AG04449 (cell line): ENCODE measurements at regions of chr4 and their contacts with region 1.

Region 1: DNA sequence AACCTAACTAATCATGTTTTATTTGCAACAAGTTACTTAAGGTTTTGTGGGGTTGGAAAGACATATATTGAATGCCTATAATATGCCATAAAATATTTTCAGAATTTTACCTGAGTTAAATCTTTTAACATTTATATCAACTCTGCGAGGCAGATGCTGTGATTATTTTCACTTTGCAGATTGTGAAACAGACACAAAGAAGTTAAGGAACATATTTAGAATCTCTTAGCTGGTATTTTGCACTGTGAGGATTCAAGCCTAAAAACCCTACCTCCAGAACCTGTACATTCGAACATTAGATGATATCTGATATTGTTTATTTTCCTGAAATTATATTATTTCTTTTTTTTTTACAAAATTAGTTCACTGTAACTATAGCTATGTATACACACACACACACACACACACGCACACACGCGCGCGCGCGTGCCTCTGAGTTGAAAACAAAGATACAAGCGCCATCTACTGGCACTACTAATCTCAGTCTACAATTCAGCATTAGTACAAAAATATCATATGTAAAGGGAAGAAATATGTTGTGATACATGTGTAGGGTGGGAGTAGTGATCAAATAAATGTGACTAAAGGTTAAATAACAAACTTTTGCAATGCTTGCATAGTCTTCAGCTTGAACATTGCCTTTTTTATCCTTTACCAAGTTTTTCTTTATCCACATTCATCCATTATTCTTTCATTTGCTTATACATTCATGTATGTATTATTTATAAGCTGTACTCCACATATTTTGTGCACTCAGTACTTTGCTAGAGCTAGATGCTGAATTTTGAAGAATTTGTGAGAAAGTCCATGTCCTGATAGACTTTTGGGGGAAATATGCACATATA is 61.5 kb downstream of the ANXA10 start:
- DNase-seq: no peak
- H3K4me3 ChIP-seq: no peak overlapping the region
- CTCF ChIP-seq: peak; percentile 58

Region 2: GRCh38 chr4:167021545-167022155 is 1132.2 kb before region 1 on chr4:
- CTCF ChIA-PET with region 1: interaction called, 21 read pairs
- POLR2A ChIA-PET with region 1: no interaction called
- DNase-seq: no peak
- H3K4me3 ChIP-seq: no peak overlapping the region
- CTCF ChIP-seq: peak; percentile 60

Region 3: DNA sequence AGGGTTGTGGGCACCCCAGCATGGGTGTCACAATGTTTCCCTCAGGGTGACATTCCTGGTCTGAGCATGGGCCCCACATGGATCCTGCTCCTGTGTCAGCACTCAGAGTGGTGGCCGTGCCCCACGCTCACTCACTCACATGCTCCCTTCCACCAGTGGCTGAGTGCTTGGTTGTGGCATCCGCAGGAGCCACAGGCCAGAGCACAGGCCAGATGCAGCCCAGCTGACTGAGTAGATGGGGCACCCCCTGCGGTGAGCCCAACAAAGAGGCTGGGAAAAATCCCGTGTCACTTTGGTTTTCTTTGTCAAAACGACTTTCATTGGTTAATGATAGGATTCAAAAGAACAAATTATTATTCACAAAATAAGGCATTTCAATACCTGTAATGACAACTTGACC is 266.1 kb before region 1 on chr4:
- CTCF ChIA-PET with region 1: no interaction called
- POLR2A ChIA-PET with region 1: no interaction called
- DNase-seq: no peak
- H3K4me3 ChIP-seq: no peak overlapping the region
- CTCF ChIP-seq: no peak

Region 4: DNA sequence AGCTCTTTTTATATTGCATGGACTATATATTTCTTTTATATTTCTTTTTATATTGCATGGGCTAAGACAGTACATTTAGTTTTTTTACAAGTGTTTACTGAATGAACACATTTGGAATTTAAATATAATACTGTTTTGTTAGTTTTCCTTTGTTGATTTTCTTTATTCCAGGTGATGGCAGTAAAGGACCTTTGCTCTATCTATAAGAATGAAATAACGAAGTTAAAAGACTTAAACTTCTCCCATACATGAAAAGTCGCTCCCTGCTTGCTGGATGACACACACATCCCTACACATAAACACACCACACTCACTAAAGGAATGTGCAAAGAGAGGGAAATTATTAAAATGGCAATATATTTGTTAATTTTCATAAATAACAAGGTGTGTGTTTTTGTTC is 164.0 kb before region 1 on chr4:
- CTCF ChIA-PET with region 1: interaction called, 19 read pairs
- POLR2A ChIA-PET with region 1: no interaction called
- DNase-seq: no peak
- H3K4me3 ChIP-seq: no peak overlapping the region
- CTCF ChIP-seq: no peak

Region 5: DNA sequence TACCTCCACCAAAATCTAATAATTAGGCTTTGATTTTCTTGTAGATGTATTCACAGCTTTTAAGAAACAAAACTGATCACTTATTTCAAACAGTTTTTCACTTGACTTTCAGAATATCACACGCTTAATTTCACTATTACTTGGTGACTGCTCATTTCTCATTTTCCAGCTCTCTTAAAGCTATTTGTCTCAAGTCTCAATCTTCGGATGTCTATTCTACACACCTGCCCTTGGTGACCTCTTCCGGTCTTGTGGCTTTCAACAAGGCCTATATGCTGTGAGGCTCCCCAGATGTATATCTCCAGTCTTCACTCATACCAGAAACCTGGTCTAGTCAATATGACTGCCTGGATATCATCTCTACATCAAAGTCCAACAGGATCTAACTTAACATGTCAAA is 96.4 kb before region 1 on chr4:
- CTCF ChIA-PET with region 1: no interaction called
- POLR2A ChIA-PET with region 1: no interaction called
- DNase-seq: no peak
- H3K4me3 ChIP-seq: no peak overlapping the region
- CTCF ChIP-seq: no peak

Region 6: GRCh38 chr4:168129046-168129772 is 24.6 kb before region 1 on chr4:
- CTCF ChIA-PET with region 1: interaction called, 12 read pairs
- POLR2A ChIA-PET with region 1: no interaction called
- DNase-seq: no peak
- H3K4me3 ChIP-seq: no peak overlapping the region
- CTCF ChIP-seq: no peak

Region 7: GRCh38 chr4:168139336-168139735 is 14.5 kb before region 1 on chr4:
- CTCF ChIA-PET with region 1: interaction called, 31 read pairs
- POLR2A ChIA-PET with region 1: no interaction called
- DNase-seq: peak; percentile 58
- H3K4me3 ChIP-seq: no peak overlapping the region
- CTCF ChIP-seq: no peak

Region 8: DNA sequence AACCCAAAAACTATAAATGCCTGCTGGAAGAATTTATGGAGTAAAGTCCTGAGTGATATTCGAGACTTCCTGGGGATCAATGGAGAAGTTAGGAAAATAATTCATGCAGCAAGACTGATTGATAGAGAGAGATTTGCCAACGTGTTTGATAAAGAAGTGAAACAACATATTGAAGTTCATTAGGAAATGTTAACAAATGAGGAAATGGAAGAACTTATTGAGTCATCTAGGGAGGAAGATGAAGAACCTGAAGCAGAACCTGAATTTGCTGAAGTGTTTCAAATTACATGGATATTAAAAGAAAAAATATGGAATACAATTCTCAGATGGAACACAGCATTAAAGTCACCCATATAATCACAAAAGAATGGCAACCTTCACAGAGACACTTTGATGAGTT is 125.7 kb after region 1 on chr4:
- CTCF ChIA-PET with region 1: no interaction called
- POLR2A ChIA-PET with region 1: no interaction called
- DNase-seq: no peak
- H3K4me3 ChIP-seq: no peak overlapping the region
- CTCF ChIP-seq: no peak